ENCODE measurements at regions of chr18 and their contacts with region 1.

Region 1: DNA sequence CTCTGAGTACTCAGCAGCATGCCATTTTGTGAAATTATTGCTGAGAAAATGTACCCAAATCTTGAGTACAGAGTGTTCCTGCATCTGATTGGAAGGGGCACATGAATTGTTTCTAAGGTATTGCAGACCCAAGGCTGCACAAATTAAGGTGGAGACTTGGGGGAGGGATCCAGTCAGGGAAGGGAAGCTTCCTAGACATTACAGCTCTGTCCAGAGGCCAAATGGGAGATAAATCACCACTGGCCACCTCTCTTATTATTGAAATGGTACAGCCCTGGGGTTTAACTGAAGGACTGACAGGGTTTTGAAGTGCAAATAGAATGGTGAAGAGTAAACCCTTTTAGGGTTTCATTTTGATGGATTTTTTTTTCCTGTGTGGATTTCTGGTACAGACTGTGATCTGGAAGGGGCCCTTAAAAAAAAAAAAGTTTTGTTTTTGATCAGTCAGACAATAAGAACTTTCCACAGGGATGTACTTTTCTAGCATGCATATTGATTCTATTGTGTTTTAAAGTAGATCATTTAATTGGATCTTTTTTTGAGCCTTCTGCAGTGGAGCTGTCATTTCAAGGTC is 119.4 kb downstream of the GREB1L start:
- DNase-seq: no peak
- H3K4me3 ChIP-seq: no peak overlapping the region
- H3K27ac ChIP-seq: peak overlapping the region in 1 of 2 donors; percentile 32
- H3K4me1 ChIP-seq: peaks cover 0 to 13% of the 10 kb centered on the region in 2 donors
- H3K27me3 ChIP-seq: no peaks in the 10 kb centered on the region
- CTCF ChIP-seq: no peak

Region 2: DNA sequence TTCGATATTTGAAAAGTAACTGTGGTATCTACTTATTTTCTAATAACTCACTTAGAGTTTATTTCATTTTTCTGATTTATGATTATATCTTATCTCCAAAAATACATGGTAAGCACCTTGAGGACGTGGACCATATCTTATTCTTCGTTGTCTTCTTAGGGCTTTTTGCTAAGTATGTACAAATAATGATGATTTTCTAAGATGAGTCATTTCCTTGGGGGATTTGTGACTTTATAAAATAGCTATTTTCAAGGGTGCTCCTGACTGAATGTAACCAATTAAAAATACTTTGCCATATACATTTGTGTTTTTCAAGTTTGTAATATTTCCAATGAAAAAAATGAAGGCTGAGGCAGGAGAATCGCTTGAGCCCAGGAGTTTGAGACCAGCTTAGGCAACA is 63.0 kb before region 1 on chr18:
- intact Hi-C with region 1: loop called (anchors 10 kb)
- DNase-seq: no peak
- H3K4me3 ChIP-seq: no peak overlapping the region
- H3K27ac ChIP-seq: no peak overlapping the region
- H3K4me1 ChIP-seq: no peaks in the 10 kb centered on the region
- H3K27me3 ChIP-seq: no peaks in the 10 kb centered on the region
- CTCF ChIP-seq: no peak

Region 3: DNA sequence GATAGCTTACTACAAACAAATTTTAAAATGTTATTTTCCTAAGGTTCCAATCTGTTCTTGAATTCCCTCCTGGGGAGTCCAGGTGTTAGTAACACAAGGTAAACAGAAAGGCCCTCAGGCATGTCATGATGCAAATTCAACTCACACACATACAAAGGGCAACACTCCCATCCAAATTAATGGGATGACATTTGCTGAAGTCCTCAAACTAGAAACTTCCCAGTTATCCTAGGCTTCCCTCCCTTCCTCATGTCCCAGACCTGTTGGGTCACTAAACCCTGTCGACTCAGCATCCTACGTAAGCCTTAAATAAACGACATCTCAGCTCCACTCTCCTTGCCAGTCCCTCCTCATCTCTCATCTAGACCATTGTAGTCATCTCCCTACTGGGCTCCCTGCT is 34.3 kb before region 1 on chr18:
- intact Hi-C with region 1: no loop called
- DNase-seq: no peak
- H3K4me3 ChIP-seq: no peak overlapping the region
- H3K27ac ChIP-seq: no peak overlapping the region
- H3K4me1 ChIP-seq: peaks cover 0 to 10% of the 10 kb centered on the region in 2 donors
- H3K27me3 ChIP-seq: no peaks in the 10 kb centered on the region
- CTCF ChIP-seq: no peak